CD4-positive, alpha-beta T cell (primary cell): ENCODE measurements at regions of chr14 and their contacts with region 1.

Region 1: GRCh38 chr14:102139248-102140026 is at the start of gene WDR20:
- DNase-seq: peak; percentile 99 to 100 (median 99)
- ATAC-seq: peak; percentile 94
- H3K4me3 ChIP-seq: peak within 1 kb of the TSS; percentile 96
- H3K4me3 Mint-ChIP-seq: peak within 1 kb of the TSS; percentile 100
- H3K27ac ChIP-seq: peak within 1 kb of the TSS; percentile 77 to 88
- H3K27ac Mint-ChIP-seq: peak within 1 kb of the TSS; percentile 99
- H3K4me1 ChIP-seq: peaks cover 16% of the 10 kb centered on the region
- H3K4me1 Mint-ChIP-seq: peaks cover 30% of the 10 kb centered on the region
- H3K27me3 ChIP-seq: no peaks in the 10 kb centered on the region
- H3K27me3 Mint-ChIP-seq: no peaks in the 10 kb centered on the region
- CTCF ChIP-seq: no peak
- total RNA-seq, gene WDR20: 40.1 to 41.2 TPM

Region 2: DNA sequence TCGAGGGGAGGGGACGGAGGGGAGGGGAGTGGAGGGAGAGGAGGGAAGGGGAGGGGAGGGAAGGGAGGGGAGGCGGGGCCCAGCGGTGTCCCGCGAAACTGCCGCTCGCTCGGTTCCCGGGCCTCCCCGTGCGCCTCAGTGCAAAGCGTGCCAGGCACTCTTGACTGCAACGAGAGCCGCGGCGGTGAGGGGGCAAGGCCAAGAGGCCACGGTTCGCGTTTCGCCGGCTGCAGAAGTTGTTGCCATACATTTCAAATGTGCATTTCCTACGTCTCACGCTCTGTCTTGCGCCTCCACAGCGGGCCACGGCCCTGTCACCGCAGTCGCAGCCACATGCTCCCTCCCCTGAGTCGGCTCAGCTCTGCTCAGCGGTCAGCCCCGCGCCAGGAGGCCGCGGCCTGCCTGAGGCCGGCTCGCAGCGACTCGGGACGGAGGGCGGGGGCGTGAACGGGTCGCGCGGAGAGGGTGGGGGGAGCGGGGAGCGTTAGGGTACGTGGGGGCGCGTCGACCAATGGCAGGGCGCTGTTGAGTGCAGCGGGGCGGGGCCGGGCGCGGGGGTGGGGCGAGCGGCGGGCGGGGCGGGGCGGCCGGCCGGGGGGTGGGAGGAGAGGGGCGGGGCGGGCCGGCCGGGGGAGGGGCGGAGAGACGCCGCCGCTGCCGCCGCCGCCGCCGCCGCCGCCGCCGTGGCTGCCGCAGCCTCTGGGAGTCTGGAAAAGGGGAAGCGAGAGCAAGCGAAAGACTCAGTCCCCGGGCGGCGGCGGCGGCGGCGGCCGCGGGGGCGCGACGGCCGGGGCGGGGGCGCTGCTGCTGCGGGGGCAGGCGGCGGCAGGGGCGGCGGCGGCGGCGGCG is 378.2 kb before region 1 on chr14 and contains the start of gene PPP2R5C:
- CTCF ChIA-PET with region 1: no interaction called
- POLR2A ChIA-PET with region 1: no interaction called
- intact Hi-C with region 1: loop called in 1 of 2 experiments (anchors 5 kb)
- DNase-seq: peak; percentile 78 to 94 (median 86)
- ATAC-seq: peak; percentile 60
- H3K4me3 ChIP-seq: peak within 1 kb of the TSS; percentile 97
- H3K4me3 Mint-ChIP-seq: peak within 1 kb of the TSS; percentile 97
- H3K27ac ChIP-seq: peak within 1 kb of the TSS; percentile 79
- H3K27ac Mint-ChIP-seq: peak within 1 kb of the TSS; percentile 91
- H3K4me1 ChIP-seq: peaks cover 30% of the 10 kb centered on the region
- H3K4me1 Mint-ChIP-seq: peaks cover 43% of the 10 kb centered on the region
- H3K27me3 ChIP-seq: no peaks in the 10 kb centered on the region
- H3K27me3 Mint-ChIP-seq: no peaks in the 10 kb centered on the region
- CTCF ChIP-seq: no peak
- total RNA-seq, gene PPP2R5C: 463 to 487 TPM

Region 3: DNA sequence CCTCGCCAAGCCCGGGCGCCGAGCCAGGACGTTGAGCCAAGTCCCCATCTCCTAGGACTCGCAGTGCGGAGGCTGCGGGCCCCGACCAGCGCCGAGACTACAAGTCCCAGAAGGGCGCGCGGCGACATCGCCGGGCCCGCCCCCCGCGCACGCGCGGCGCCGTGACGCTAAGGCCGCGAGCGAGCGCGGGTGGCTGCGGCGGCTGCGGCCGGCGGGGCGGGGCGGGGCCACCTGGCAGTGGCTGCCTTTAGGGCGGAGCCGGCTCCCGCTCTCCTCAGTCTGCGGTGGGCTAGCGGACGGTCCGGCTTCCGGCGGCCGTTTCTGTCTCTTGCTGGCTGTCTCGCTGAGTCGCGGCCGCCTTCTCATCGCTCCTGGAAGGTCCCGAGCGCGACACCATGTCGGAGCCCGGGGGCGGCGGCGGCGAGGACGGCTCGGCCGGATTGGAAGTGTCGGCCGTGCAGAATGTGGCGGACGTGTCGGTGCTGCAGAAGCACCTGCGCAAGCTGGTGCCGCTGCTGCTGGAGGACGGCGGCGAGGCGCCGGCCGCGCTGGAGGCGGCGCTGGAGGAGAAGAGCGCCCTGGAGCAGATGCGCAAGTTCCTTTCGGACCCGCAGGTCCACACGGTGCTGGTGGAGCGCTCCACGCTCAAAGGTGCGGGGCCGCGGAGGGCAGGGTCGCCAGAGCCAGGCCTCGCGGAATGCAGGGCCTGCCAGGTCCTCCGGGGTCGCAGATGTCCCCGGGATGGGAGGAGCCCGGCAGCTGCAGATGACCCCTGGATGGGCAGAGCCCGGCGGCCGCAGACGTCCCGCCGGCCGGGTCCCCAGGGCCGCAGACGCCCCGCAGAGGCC is 174.9 kb before region 1 on chr14 and contains the start of gene DYNC1H1:
- CTCF ChIA-PET with region 1: no interaction called
- POLR2A ChIA-PET with region 1: no interaction called
- intact Hi-C with region 1: loop called in 1 of 2 experiments (anchors 2 kb)
- DNase-seq: peak; percentile 75 to 96 (median 86)
- ATAC-seq: peak; percentile 83
- H3K4me3 ChIP-seq: peak within 1 kb of the TSS; percentile 86
- H3K4me3 Mint-ChIP-seq: peak within 1 kb of the TSS; percentile 93
- H3K27ac ChIP-seq: peak within 1 kb of the TSS; percentile 68 to 82
- H3K27ac Mint-ChIP-seq: peak within 1 kb of the TSS; percentile 85
- H3K4me1 ChIP-seq: peaks cover 44% of the 10 kb centered on the region
- H3K4me1 Mint-ChIP-seq: peaks cover 53% of the 10 kb centered on the region
- H3K27me3 ChIP-seq: no peaks in the 10 kb centered on the region
- H3K27me3 Mint-ChIP-seq: no peaks in the 10 kb centered on the region
- CTCF ChIP-seq: no peak
- total RNA-seq, gene DYNC1H1: 286 to 293 TPM

Region 4: GRCh38 chr14:102154821-102155549 is 15.5 kb after region 1 on chr14:
- CTCF ChIA-PET with region 1: no interaction called
- POLR2A ChIA-PET with region 1: no interaction called
- intact Hi-C with region 1: no loop called
- DNase-seq: no peak
- ATAC-seq: no peak
- H3K4me3 ChIP-seq: no peak overlapping the region
- H3K4me3 Mint-ChIP-seq: no peak overlapping the region
- H3K27ac ChIP-seq: no peak overlapping the region
- H3K27ac Mint-ChIP-seq: no peak overlapping the region
- H3K4me1 ChIP-seq: peaks cover 10% of the 10 kb centered on the region
- H3K4me1 Mint-ChIP-seq: peaks cover 67% of the 10 kb centered on the region
- H3K27me3 ChIP-seq: no peaks in the 10 kb centered on the region
- H3K27me3 Mint-ChIP-seq: no peaks in the 10 kb centered on the region
- CTCF ChIP-seq: no peak

Region 5: DNA sequence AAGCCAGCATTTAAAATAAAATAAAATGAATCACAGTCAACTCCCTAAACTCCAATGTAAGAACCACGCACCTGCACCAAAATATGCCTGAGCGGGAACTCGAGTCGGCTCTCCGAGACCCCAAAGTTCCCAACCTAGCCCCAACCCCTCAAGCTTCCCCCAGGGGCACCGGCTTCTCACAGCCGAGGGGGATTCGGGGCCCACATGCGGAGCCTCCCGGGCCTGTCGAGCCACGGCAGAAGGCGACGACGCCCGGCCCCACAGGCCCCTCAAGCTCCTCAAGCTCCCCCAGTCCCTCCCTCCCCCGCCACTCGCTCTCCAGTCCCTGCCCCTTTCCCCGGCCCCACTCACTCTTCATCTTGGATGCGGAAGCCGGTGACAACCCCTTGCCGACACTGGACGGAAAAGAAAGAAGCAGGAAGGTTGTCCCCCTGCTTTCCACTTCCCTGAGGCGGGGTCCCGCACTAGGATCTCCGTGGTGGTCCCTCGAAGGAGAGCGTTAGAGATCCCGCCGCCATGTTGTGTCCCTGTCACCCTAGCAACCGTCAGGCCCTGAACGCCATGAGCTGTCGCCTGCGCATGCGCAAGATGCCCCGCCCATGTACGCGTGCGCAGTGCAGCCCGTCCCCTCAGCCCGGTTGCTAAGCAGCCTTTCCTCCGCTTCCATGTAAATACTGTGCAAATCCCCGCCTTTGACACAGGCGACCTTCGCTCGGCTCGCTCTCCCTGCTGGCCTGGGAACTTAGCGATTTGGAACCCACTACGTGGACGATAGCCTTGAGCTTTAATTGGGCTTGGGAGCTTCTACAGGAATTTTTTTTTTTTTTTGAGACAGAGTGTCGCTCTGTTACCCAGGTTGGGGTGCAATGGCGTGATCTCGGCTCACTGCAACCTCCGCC is 165.4 kb after region 1 on chr14 and contains the start of gene MOK:
- CTCF ChIA-PET with region 1: no interaction called
- POLR2A ChIA-PET with region 1: no interaction called
- intact Hi-C with region 1: loop called in 1 of 2 experiments (anchors 2 kb)
- DNase-seq: peak; percentile 93 to 99 (median 96)
- ATAC-seq: peak; percentile 91
- H3K4me3 ChIP-seq: peak within 1 kb of the TSS; percentile 81
- H3K4me3 Mint-ChIP-seq: peak within 1 kb of the TSS; percentile 95
- H3K27ac ChIP-seq: peak within 1 kb of the TSS; percentile 57 to 77
- H3K27ac Mint-ChIP-seq: peak within 1 kb of the TSS; percentile 91
- H3K4me1 ChIP-seq: peaks cover 12% of the 10 kb centered on the region
- H3K4me1 Mint-ChIP-seq: peaks cover 6% of the 10 kb centered on the region
- H3K27me3 ChIP-seq: no peaks in the 10 kb centered on the region
- H3K27me3 Mint-ChIP-seq: peaks cover 5% of the 10 kb centered on the region
- CTCF ChIP-seq: no peak
- total RNA-seq, gene MOK: 2.3 to 2.5 TPM

Region 6: GRCh38 chr14:102509744-102510615 is 370.5 kb after region 1 on chr14 and contains the start of gene ANKRD9:
- CTCF ChIA-PET with region 1: no interaction called
- POLR2A ChIA-PET with region 1: no interaction called
- intact Hi-C with region 1: loop called in 1 of 2 experiments (anchors 5 kb)
- DNase-seq: peak; percentile 59 to 95 (median 82)
- ATAC-seq: peak; percentile 81
- H3K4me3 ChIP-seq: peak within 1 kb of the TSS; percentile 74
- H3K4me3 Mint-ChIP-seq: peak within 1 kb of the TSS; percentile 92
- H3K27ac ChIP-seq: peak within 1 kb of the TSS in 1 of 2 donors; percentile 34
- H3K27ac Mint-ChIP-seq: peak within 1 kb of the TSS; percentile 62
- H3K4me1 ChIP-seq: peaks cover 25% of the 10 kb centered on the region
- H3K4me1 Mint-ChIP-seq: peaks cover 18% of the 10 kb centered on the region
- H3K27me3 ChIP-seq: no peaks in the 10 kb centered on the region
- H3K27me3 Mint-ChIP-seq: no peaks in the 10 kb centered on the region
- CTCF ChIP-seq: no peak
- total RNA-seq, gene ANKRD9: 4.4 to 5.5 TPM